ENCODE measurements at regions of chr4 and their contacts with region 1.

Region 1: GRCh38 chr4:59057804-59058203 is 1947.6 kb upstream of the IGFBP7 start:
- DNase-seq: peak; percentile 89
- ATAC-seq: peak; percentile 98
- H3K4me3 ChIP-seq: no peak overlapping the region
- H3K27ac ChIP-seq: no peak overlapping the region
- H3K4me1 ChIP-seq: peaks cover 16% of the 10 kb centered on the region
- H3K27me3 ChIP-seq: no peaks in the 10 kb centered on the region
- CTCF ChIP-seq: no peak

Region 2: GRCh38 chr4:58776627-58777026 is 281.2 kb before region 1 on chr4:
- CTCF ChIA-PET with region 1: no interaction called
- POLR2A ChIA-PET with region 1: no interaction called
- intact Hi-C with region 1: loop called (anchors 1 kb)
- DNase-seq: peak; percentile 92
- ATAC-seq: peak; percentile 99
- H3K4me3 ChIP-seq: peak overlapping the region; percentile 14; the same call in 1 of the 2 replicates
- H3K27ac ChIP-seq: peak overlapping the region; percentile 87
- H3K4me1 ChIP-seq: peaks cover 28% of the 10 kb centered on the region
- H3K27me3 ChIP-seq: no peaks in the 10 kb centered on the region
- CTCF ChIP-seq: no peak

Measured in PC-3 (cell line).